B cell (primary cell): ENCODE measurements at regions of chr1 and their contacts with region 1.

Region 1: GRCh38 chr1:101060992-101061391 is 35.4 kb upstream of the DPH5 start:
- DNase-seq: no peak
- ATAC-seq: no peak
- H3K4me3 ChIP-seq: no peak overlapping the region
- H3K4me3 Mint-ChIP-seq: no peak overlapping the region
- H3K27ac ChIP-seq: no peak overlapping the region
- H3K27ac Mint-ChIP-seq: no peak overlapping the region
- H3K4me1 ChIP-seq: peaks cover 33 to 38% of the 10 kb centered on the region in 2 donors
- H3K4me1 Mint-ChIP-seq: peaks cover 52% of the 10 kb centered on the region
- H3K27me3 ChIP-seq: no peaks in the 10 kb centered on the region
- H3K27me3 Mint-ChIP-seq: no peaks in the 10 kb centered on the region
- CTCF ChIP-seq: no peak

Region 2: DNA sequence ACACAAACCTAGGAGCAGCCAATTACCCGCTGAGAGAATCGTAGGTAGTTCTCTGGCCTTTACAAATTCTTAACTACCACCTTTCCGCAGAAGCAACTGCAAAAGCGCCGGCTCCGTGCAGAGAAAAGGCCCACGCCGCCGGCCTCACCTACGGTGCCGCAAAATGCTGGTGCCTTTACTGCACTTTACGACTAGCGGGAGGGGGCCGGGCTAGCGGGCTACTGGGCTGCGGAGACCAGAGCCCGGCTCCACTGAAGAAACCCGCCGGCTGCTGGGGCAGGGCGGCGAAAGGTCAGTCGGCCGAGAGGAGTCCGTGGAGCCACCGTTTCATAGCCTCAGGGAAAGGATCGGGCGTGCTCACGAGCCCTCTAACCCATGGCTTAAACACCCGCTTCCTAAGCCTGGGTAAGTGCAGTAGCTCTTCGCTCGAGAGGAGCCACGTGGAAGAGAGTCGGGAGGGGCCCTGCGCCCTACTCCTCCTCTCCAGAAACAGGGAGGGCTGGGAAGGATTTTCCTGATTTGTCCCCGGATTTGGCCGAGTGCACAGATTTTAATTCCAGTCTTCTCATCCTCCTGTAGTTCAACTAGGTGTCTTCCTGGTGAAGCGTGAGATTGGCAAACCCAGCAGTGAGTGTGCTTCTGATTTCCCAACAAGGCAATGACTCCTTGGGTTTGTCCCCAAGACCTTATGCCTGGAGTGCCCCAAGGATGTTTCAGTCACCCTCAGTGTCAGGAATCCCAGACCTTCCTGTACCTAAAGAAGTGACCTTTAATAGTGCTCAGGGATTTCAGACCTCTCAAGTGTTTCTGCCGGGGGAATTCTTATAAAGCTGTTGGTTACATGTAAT is 35.1 kb before region 1 on chr1 and contains the start of gene DPH5:
- CTCF ChIA-PET with region 1: interaction called, 4 read pairs
- POLR2A ChIA-PET with region 1: no interaction called
- intact Hi-C with region 1: loop called (anchors 5 kb)
- DNase-seq: peak; percentile 90
- ATAC-seq: peak; percentile 96
- H3K4me3 ChIP-seq: peak within 1 kb of the TSS; percentile 81 to 97 (median 92)
- H3K4me3 Mint-ChIP-seq: peak within 1 kb of the TSS; percentile 98
- H3K27ac ChIP-seq: peak within 1 kb of the TSS; percentile 78 to 85
- H3K27ac Mint-ChIP-seq: peak within 1 kb of the TSS; percentile 97
- H3K4me1 ChIP-seq: peaks cover 45 to 47% of the 10 kb centered on the region in 2 donors
- H3K4me1 Mint-ChIP-seq: peaks cover 50% of the 10 kb centered on the region
- H3K27me3 ChIP-seq: no peaks in the 10 kb centered on the region
- H3K27me3 Mint-ChIP-seq: no peaks in the 10 kb centered on the region
- CTCF ChIP-seq: no peak
- total RNA-seq, gene DPH5: 39.4 and 42.5 TPM in 2 replicates

Region 3: DNA sequence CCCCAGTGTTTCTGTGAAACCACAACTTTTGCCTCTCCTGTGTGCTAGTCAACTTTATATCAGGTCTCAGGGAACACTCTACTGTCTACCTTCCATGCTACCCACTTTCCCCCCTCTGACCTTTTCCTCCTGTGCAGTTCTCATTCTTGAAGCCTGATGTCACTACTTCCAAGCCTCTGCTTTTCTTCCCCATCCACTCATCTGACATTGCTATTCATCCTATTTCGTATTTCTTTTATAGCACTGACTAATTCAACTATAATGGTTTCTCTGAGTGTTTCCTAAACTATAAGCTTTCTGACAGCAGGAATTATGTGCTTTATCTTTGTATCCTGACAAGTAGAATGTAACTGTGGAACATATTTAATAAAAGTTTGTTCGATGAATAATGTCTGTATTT is 17.2 kb before region 1 on chr1:
- CTCF ChIA-PET with region 1: no interaction called
- POLR2A ChIA-PET with region 1: interaction called, 12 read pairs
- intact Hi-C with region 1: no loop called
- DNase-seq: no peak
- ATAC-seq: no peak
- H3K4me3 ChIP-seq: no peak overlapping the region
- H3K4me3 Mint-ChIP-seq: no peak overlapping the region
- H3K27ac ChIP-seq: no peak overlapping the region
- H3K27ac Mint-ChIP-seq: no peak overlapping the region
- H3K4me1 ChIP-seq: peaks cover 13 to 14% of the 10 kb centered on the region in 2 donors
- H3K4me1 Mint-ChIP-seq: peaks cover 28% of the 10 kb centered on the region
- H3K27me3 ChIP-seq: no peaks in the 10 kb centered on the region
- H3K27me3 Mint-ChIP-seq: no peaks in the 10 kb centered on the region
- CTCF ChIP-seq: no peak

Region 4: DNA sequence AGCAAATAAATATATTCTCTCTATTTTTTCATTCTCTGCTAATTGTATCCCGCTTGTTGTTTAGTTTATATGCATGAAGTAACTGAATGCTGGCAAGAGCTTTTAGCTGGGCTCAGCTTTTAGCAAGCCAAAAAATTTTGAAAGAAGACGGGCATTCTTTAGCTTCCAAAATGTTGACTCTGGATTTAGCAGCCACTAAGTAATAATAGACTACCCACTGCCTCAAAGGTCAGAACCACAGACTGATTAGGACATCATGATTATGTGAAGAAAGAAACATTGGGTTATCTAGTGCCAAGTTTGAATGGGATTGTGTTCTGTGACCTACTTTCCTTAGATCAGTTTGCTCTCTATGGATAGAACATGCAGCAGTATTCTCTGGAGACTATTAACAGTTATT is 44.9 kb after region 1 on chr1:
- CTCF ChIA-PET with region 1: no interaction called
- POLR2A ChIA-PET with region 1: no interaction called
- intact Hi-C with region 1: loop called (anchors 5 kb)
- DNase-seq: no peak
- ATAC-seq: no peak
- H3K4me3 ChIP-seq: no peak overlapping the region
- H3K4me3 Mint-ChIP-seq: no peak overlapping the region
- H3K27ac ChIP-seq: no peak overlapping the region
- H3K27ac Mint-ChIP-seq: no peak overlapping the region
- H3K4me1 ChIP-seq: peaks cover 12 to 13% of the 10 kb centered on the region in 2 donors
- H3K4me1 Mint-ChIP-seq: peaks cover 24% of the 10 kb centered on the region
- H3K27me3 ChIP-seq: no peaks in the 10 kb centered on the region
- H3K27me3 Mint-ChIP-seq: no peaks in the 10 kb centered on the region
- CTCF ChIP-seq: no peak

Region 5: DNA sequence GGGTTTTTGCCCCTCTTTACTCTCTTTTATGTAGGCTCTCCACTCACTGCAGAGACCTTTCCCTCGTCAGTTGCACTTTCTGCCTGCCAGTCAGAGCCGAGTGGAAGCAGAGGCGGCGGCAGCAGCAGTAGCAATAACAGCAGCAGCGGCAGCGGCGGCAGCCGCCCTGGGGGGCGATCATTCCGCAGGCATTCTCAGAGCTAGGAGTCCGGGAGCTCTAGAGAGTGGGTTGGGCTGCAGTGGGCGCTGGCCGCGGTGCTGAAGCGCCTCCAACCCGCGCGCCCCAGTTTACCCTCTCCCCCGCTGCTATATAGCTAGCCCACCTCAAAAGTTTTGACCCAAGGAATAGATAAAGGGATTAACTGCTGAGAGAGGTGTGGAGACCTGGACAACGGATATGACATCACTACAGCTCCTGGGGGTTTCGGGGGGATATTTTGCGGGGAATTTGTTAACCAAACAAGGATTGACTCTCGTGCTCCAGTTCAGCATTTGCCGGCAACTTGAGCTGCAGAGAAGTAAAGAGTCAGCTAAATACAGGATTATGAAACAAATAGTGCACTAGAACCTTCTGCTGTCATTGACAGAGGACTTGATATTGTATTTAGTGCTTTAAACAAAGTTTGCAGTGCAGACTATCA is 936.0 kb after region 1 on chr1 and contains the start of gene OLFM3:
- CTCF ChIA-PET with region 1: no interaction called
- POLR2A ChIA-PET with region 1: no interaction called
- intact Hi-C with region 1: no loop called
- DNase-seq: no peak
- ATAC-seq: no peak
- H3K4me3 ChIP-seq: no peak within 1 kb of the TSS
- H3K4me3 Mint-ChIP-seq: no peak within 1 kb of the TSS
- H3K27ac ChIP-seq: no peak within 1 kb of the TSS
- H3K27ac Mint-ChIP-seq: no peak within 1 kb of the TSS
- H3K4me1 ChIP-seq: no peaks in the 10 kb centered on the region
- H3K4me1 Mint-ChIP-seq: peaks cover 4% of the 10 kb centered on the region
- H3K27me3 ChIP-seq: peaks cover 0 to 14% (median 0%) of the 10 kb centered on the region in 4 experiments
- H3K27me3 Mint-ChIP-seq: peaks cover 21% of the 10 kb centered on the region
- CTCF ChIP-seq: no peak
- total RNA-seq, gene OLFM3: not detected in 2 replicates